ENCODE measurements at regions of chr9 and their contacts with region 1.

Region 1: DNA sequence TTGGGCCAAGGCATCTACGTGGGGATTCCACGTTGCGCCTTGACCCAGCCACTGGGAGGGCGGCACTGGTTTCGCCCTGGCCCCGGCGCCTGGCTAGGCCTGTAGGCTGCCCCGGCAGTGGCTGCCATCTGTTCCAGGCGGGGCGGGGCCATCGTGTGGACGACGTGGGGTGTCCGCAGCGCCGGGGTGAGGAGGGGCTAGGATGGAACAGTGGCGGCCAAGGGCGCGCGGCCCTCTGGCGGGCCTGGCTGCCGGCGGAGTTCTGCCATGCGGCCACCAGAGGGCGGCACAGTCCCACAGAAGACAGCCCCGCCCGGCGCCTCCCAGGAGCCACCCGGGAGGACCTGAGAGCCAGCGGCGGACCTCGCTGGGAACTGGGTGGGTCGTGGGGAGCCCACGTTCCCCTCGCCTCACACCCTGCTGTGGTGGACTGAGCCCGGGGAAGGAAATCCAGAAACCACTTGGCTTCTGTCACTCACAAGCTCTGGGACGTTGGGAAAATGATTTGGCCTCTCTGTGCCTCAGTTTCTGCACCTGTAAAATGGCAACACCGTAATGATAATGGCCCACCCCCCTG is 22.6 kb upstream of the RAPGEF1 start:
- DNase-seq: peak; percentile 62 to 88 (median 72)
- ATAC-seq: peak; percentile 97
- H3K4me3 ChIP-seq: no peak overlapping the region
- H3K4me3 Mint-ChIP-seq: no peak overlapping the region
- H3K27ac ChIP-seq: no peak overlapping the region
- H3K27ac Mint-ChIP-seq: no peak overlapping the region
- H3K4me1 ChIP-seq: peaks cover 7% of the 10 kb centered on the region
- H3K4me1 Mint-ChIP-seq: no peaks in the 10 kb centered on the region
- H3K27me3 ChIP-seq: no peaks in the 10 kb centered on the region
- H3K27me3 Mint-ChIP-seq: peaks cover 21% of the 10 kb centered on the region
- CTCF ChIP-seq: peak; percentile 97

Region 2: GRCh38 chr9:131744171-131744719 is 18.2 kb before region 1 on chr9:
- CTCF ChIA-PET with region 1: no interaction called
- POLR2A ChIA-PET with region 1: no interaction called
- intact Hi-C with region 1: no loop called
- DNase-seq: peak in 12 of 14 experiments; percentile 36 to 68 (median 52)
- ATAC-seq: peak; percentile 68
- H3K4me3 ChIP-seq: no peak overlapping the region
- H3K4me3 Mint-ChIP-seq: peak overlapping the region; percentile 72
- H3K27ac ChIP-seq: peak overlapping the region; percentile 35 to 61
- H3K27ac Mint-ChIP-seq: peak overlapping the region; percentile 92
- H3K4me1 ChIP-seq: peaks cover 31% of the 10 kb centered on the region
- H3K4me1 Mint-ChIP-seq: peaks cover 32% of the 10 kb centered on the region
- H3K27me3 ChIP-seq: no peaks in the 10 kb centered on the region
- H3K27me3 Mint-ChIP-seq: no peaks in the 10 kb centered on the region
- CTCF ChIP-seq: no peak

Region 3: DNA sequence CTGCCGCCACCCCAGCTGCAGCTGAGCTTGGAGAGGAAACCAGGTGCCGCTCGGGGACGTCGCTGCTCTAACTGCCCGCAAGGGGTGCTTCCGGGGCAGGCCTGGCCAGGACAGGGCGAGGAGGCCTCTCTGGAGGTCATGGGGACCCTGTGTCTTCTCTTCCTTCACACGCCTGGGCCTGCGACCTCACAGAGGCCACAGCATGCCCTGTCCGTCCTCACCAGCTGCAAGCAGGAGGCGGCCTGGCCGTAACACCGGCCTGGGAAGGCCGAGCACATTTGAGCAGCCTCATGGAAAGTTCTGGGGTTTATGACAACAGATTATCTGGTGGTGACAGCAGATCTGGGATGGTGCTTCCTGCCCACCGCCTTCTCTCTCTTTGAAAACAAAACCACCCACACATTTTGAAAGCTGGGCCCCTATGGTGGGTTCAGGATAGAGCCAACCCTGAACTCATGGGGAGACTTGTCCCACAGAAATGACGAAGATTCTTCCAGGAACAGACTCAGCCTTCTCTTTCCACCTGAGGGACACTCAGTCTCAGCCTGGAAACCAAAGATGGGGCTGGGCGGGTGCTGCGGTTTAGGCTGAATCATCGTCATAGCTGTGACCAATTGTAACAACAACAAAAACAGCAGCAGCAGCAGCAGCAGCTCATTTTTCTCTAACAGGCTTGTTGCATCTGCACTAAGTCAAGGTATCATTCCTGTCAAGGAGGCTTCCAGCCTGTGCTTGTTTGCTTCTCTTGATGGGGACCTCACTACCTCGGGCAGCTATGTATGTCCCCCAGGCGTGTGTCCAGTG is 77.0 kb after region 1 on chr9:
- CTCF ChIA-PET with region 1: no interaction called
- POLR2A ChIA-PET with region 1: no interaction called
- intact Hi-C with region 1: no loop called
- DNase-seq: peak in 13 of 14 experiments; percentile 4 to 76 (median 49)
- ATAC-seq: peak; percentile 79
- H3K4me3 ChIP-seq: no peak overlapping the region
- H3K4me3 Mint-ChIP-seq: peak overlapping the region; percentile 17
- H3K27ac ChIP-seq: peak overlapping the region in 1 of 2 donors; percentile 58
- H3K27ac Mint-ChIP-seq: peak overlapping the region; percentile 97
- H3K4me1 ChIP-seq: peaks cover 27% of the 10 kb centered on the region
- H3K4me1 Mint-ChIP-seq: peaks cover 14% of the 10 kb centered on the region
- H3K27me3 ChIP-seq: peaks cover 0 to 3% of the 10 kb centered on the region in 2 experiments
- H3K27me3 Mint-ChIP-seq: peaks cover 4% of the 10 kb centered on the region
- CTCF ChIP-seq: no peak

Region 4: DNA sequence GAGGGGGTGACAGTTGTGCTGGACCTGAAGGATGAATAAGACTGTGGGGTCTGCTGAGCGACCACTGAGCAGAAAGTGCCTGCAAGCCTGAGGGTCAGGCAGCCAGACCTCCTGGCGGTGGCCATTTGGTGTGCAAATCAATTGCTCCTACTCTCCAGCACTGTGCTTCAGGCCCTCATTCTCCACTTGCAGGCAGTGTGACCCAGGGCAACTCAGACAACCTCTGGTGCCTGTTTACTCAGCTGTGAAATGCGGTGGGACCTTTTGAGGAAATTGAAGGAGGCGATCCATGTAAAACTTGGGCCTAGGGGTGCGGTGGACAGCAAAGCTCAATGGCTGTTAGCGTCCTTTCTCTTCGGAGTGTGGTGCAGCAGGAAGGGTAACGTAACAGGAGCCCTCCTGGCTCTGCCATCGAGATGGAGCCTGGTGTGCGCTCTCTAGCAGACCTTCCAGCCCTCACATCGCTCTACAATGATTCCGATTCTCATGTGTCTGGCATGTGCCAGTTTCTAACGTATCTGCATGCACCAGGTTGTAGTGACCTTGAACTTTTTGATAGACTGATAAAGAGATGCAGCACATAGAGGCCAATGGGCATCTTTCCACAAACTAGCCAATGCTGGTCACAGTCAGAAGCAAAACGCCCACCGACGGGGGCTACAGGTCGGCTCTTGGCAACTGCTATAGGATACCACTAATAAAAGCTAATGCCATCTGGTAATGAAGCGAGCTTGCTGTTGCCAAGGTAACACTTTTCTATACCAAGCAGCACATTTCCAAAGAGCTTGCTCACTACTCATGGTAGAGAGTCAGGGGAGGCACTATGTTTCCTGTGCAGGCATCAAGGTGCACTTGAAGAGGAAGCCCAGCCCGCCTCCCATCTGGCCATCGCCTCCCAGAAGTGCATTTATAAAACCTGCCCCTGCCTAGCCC is 137.1 kb after region 1 on chr9:
- CTCF ChIA-PET with region 1: no interaction called
- POLR2A ChIA-PET with region 1: no interaction called
- intact Hi-C with region 1: no loop called
- DNase-seq: no peak
- ATAC-seq: no peak
- H3K4me3 ChIP-seq: no peak overlapping the region
- H3K4me3 Mint-ChIP-seq: no peak overlapping the region
- H3K27ac ChIP-seq: no peak overlapping the region
- H3K27ac Mint-ChIP-seq: no peak overlapping the region
- H3K4me1 ChIP-seq: no peaks in the 10 kb centered on the region
- H3K4me1 Mint-ChIP-seq: no peaks in the 10 kb centered on the region
- H3K27me3 ChIP-seq: no peaks in the 10 kb centered on the region
- H3K27me3 Mint-ChIP-seq: no peaks in the 10 kb centered on the region
- CTCF ChIP-seq: no peak

Region 5: DNA sequence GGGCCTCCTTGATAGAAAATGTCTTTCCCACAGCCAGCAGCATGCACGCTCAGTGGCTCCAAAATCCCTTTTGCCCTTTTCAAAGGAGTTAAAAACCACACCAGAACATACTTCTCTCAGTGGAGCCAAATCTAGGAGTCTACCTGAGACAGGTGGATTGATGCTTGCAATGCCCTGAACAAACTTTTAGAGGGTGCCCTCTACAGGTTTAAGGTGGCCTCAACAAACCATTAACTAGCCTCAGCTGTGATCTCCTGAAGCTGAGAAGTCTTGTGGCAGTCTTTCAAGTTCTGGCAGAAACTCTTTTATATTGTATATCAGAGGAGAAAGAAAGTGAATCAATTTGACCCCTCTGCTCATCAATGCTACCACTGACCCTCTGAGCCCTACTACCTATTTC is 191.9 kb after region 1 on chr9:
- CTCF ChIA-PET with region 1: no interaction called
- POLR2A ChIA-PET with region 1: no interaction called
- intact Hi-C with region 1: loop called in 1 of 2 experiments (anchors 5 kb)
- DNase-seq: no peak
- ATAC-seq: no peak
- H3K4me3 ChIP-seq: no peak overlapping the region
- H3K4me3 Mint-ChIP-seq: no peak overlapping the region
- H3K27ac ChIP-seq: no peak overlapping the region
- H3K27ac Mint-ChIP-seq: no peak overlapping the region
- H3K4me1 ChIP-seq: no peaks in the 10 kb centered on the region
- H3K4me1 Mint-ChIP-seq: no peaks in the 10 kb centered on the region
- H3K27me3 ChIP-seq: no peaks in the 10 kb centered on the region
- H3K27me3 Mint-ChIP-seq: no peaks in the 10 kb centered on the region
- CTCF ChIP-seq: no peak

Region 6: DNA sequence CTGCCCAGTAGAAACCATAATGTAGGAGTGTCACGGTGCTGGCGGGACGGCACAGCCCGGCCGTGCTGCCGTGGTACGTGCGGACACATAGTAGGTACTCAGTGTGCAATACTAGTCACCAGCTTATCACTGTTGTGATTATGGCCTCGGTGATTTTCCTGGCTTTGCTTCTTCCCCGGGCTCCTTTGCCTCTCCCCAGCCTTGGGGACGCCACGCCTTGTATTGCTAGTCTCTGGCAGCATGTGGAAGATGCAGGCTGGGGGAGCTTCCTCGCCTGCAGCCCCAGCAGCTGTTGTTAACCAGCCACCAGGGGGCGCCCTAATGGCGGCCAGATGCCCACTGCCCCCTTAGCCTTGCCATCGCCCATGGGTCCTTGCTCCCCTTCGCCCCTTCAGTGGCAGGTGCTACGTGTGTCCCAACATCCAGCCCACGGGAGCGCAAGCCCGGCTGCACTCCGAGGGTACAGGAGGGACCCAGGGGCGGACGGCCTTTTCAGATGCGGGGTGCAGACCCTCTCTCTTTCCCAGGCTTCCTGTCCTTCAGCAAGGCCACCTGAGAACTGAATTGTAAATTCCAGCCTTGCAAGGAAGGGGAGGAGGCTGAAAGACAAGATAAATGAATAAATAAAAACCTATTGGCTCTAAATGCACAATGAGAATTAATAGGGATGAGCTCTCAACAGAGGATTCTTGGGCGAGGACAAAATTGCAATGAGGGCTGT is 407.4 kb after region 1 on chr9:
- CTCF ChIA-PET with region 1: no interaction called
- POLR2A ChIA-PET with region 1: no interaction called
- intact Hi-C with region 1: loop called in 1 of 2 experiments (anchors 10 kb)
- DNase-seq: peak; percentile 24 to 78 (median 50)
- ATAC-seq: peak; percentile 52
- H3K4me3 ChIP-seq: no peak overlapping the region
- H3K4me3 Mint-ChIP-seq: no peak overlapping the region
- H3K27ac ChIP-seq: no peak overlapping the region
- H3K27ac Mint-ChIP-seq: no peak overlapping the region
- H3K4me1 ChIP-seq: no peaks in the 10 kb centered on the region
- H3K4me1 Mint-ChIP-seq: no peaks in the 10 kb centered on the region
- H3K27me3 ChIP-seq: peaks cover 20 to 33% of the 10 kb centered on the region in 2 experiments
- H3K27me3 Mint-ChIP-seq: peaks cover 56% of the 10 kb centered on the region
- CTCF ChIP-seq: peak; percentile 93

Region 7: GRCh38 chr9:132249123-132249522 is 486.7 kb after region 1 on chr9:
- CTCF ChIA-PET with region 1: interaction called, 4 read pairs
- POLR2A ChIA-PET with region 1: interaction called, 5 read pairs
- intact Hi-C with region 1: loop called (anchors 1 kb)
- DNase-seq: no peak
- ATAC-seq: no peak
- H3K4me3 ChIP-seq: no peak overlapping the region
- H3K4me3 Mint-ChIP-seq: no peak overlapping the region
- H3K27ac ChIP-seq: no peak overlapping the region
- H3K27ac Mint-ChIP-seq: no peak overlapping the region
- H3K4me1 ChIP-seq: peaks cover 3% of the 10 kb centered on the region
- H3K4me1 Mint-ChIP-seq: no peaks in the 10 kb centered on the region
- H3K27me3 ChIP-seq: peaks cover 6 to 10% of the 10 kb centered on the region in 2 experiments
- H3K27me3 Mint-ChIP-seq: peaks cover 4% of the 10 kb centered on the region
- CTCF ChIP-seq: no peak

Region 8: GRCh38 chr9:132800038-132800648 is 1037.7 kb after region 1 on chr9:
- CTCF ChIA-PET with region 1: no interaction called
- POLR2A ChIA-PET with region 1: no interaction called
- intact Hi-C with region 1: loop called (anchors 5 to 10 kb)
- DNase-seq: peak; percentile 35 to 84 (median 58)
- ATAC-seq: peak; percentile 98
- H3K4me3 ChIP-seq: no peak overlapping the region
- H3K4me3 Mint-ChIP-seq: no peak overlapping the region
- H3K27ac ChIP-seq: no peak overlapping the region
- H3K27ac Mint-ChIP-seq: no peak overlapping the region
- H3K4me1 ChIP-seq: peaks cover 15% of the 10 kb centered on the region
- H3K4me1 Mint-ChIP-seq: no peaks in the 10 kb centered on the region
- H3K27me3 ChIP-seq: peaks cover 9 to 13% of the 10 kb centered on the region in 2 experiments
- H3K27me3 Mint-ChIP-seq: peaks cover 67% of the 10 kb centered on the region
- CTCF ChIP-seq: peak; percentile 92

Measured in CD4-positive, alpha-beta T cell (primary cell).